Activated naive CD8-positive, alpha-beta T cell treated with anti-CD3 and anti-CD28 coated beads, Interleukin-2, amount 10 ng/mL, durations not matched to agents 7 days and 5 days (primary cell): ENCODE measurements at regions of chr5 and their contacts with region 1.

Region 1: GRCh38 chr5:150700594-150701293 is at the start of gene RBM22:
- DNase-seq: peak; percentile 89
- ATAC-seq: peak; percentile 97
- H3K4me3 Mint-ChIP-seq: no peak within 1 kb of the TSS
- H3K27ac Mint-ChIP-seq: no peak within 1 kb of the TSS
- H3K4me1 Mint-ChIP-seq: peaks cover 7% of the 10 kb centered on the region
- H3K27me3 Mint-ChIP-seq: no peaks in the 10 kb centered on the region
- total RNA-seq, gene RBM22: 72.9 to 74.6 TPM

Region 2: GRCh38 chr5:150548096-150548495 is 152.6 kb before region 1 on chr5:
- POLR2A ChIA-PET with region 1: no interaction called
- DNase-seq: no peak
- ATAC-seq: no peak
- H3K4me3 Mint-ChIP-seq: no peak overlapping the region
- H3K27ac Mint-ChIP-seq: no peak overlapping the region
- H3K4me1 Mint-ChIP-seq: no peaks in the 10 kb centered on the region
- H3K27me3 Mint-ChIP-seq: peaks cover 2% of the 10 kb centered on the region

Region 3: GRCh38 chr5:150764530-150764929 is 63.8 kb after region 1 on chr5:
- POLR2A ChIA-PET with region 1: no interaction called
- DNase-seq: no peak
- ATAC-seq: no peak
- H3K4me3 Mint-ChIP-seq: no peak overlapping the region
- H3K27ac Mint-ChIP-seq: peak overlapping the region; percentile 77
- H3K4me1 Mint-ChIP-seq: peaks cover 20% of the 10 kb centered on the region
- H3K27me3 Mint-ChIP-seq: peaks cover 2% of the 10 kb centered on the region

Region 4: DNA sequence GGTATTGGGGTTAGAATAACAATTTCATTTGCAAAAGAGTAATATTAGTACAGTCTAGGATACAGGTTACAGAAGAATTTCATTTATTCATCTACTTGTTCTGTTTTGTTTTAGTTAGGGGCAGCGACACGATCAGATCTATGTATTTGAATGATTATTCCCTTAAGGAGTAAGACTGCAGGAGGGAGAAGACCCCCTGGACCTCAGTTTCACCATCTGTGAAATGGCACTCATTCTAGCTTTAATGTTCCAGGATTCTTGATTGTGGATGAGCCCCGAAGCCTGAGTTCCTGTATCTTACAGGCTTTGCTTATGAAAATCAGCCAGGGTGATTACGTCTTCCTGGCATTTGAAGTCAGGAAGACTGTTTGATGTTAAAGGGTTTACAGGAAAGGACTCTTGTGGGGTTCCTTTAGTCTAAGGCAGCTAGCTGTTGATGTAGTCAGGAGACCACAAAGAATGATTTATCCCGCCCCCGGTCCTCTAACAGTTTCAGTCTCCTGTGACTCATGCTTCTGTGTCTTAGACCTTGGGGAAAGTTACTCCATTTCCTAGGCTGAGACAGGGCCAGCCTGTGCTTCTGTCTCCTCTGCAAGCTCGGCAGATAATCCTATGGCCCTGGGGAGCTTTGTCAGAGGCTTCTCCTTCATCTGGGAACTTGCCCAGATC is 89.3 kb after region 1 on chr5:
- POLR2A ChIA-PET with region 1: interaction called, 12 read pairs
- DNase-seq: peak; percentile 43
- ATAC-seq: peak; percentile 99
- H3K4me3 Mint-ChIP-seq: peak overlapping the region; percentile 70
- H3K27ac Mint-ChIP-seq: peak overlapping the region; percentile 69
- H3K4me1 Mint-ChIP-seq: peaks cover 45% of the 10 kb centered on the region
- H3K27me3 Mint-ChIP-seq: no peaks in the 10 kb centered on the region